Esophagus muscularis mucosa (tissue), 4 donors: ENCODE measurements at regions of chr12 and their contacts with region 1.

Region 1: GRCh38 chr12:39116867-39117266 is 211.5 kb upstream of the CPNE8 start:
- DNase-seq: no peak
- H3K4me3 ChIP-seq: no peak overlapping the region
- H3K27ac ChIP-seq: no peak overlapping the region
- H3K4me1 ChIP-seq: no peaks in the 10 kb centered on the region
- H3K27me3 ChIP-seq: no peaks in the 10 kb centered on the region
- CTCF ChIP-seq: no peak
- EP300 ChIP-seq: no peak
- POLR2A ChIP-seq: no peak

Region 2: GRCh38 chr12:38427442-38427841 is 689.4 kb before region 1 on chr12:
- intact Hi-C with region 1: loop called (anchors 10 kb)
- DNase-seq: no peak
- H3K4me3 ChIP-seq: no peak overlapping the region
- H3K27ac ChIP-seq: no peak overlapping the region
- H3K4me1 ChIP-seq: peaks cover 0 to 8% (median 0%) of the 10 kb centered on the region in 4 donors
- H3K27me3 ChIP-seq: no peaks in the 10 kb centered on the region
- CTCF ChIP-seq: no peak
- EP300 ChIP-seq: no peak
- POLR2A ChIP-seq: no peak